Dorsolateral prefrontal cortex (tissue), 120 donors: ENCODE measurements at regions of chr7 and their contacts with region 1.

Region 1: DNA sequence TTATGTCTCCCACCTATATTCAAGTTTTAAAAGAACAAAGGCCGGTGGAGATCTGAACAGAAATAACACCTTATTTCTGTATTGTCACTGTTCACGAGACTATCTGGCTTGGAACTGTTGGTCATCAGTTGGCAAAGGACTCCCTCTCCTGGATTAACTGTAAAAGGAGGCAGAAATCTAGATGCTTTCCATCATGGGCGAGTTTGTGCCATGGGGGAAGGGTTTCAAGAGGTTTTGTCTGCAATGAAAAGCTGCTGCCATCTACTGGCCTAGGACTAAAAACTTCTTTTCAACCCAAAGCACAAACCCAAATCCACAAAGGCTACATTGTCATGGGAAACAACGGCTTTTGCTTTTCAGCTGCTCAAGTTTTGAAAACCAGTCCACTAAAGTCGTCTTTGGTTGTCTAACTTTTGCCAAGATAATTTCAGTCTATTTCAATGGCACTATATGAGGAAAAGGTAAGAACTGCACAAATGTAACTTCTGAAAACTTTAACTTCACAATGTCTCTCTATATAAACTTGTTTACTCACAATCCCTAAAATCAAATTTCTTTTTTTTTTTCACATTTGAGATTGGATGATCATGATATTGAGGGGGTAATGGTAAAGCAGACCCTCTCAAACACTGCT is 196.8 kb downstream of the SKAP2 start:
- DNase-seq: peak in 9 of 10 donors; percentile 48 to 86 (median 69)
- H3K4me3 ChIP-seq: peak overlapping the region in 4 of 59 donors; percentile 9 to 39 (median 21)
- H3K27ac ChIP-seq: peak overlapping the region in 5 of 59 donors; percentile 10 to 51 (median 34)
- H3K27me3 ChIP-seq: peaks cover 0 to 19% (median 0%) of the 10 kb centered on the region in 45 donors
- CTCF ChIP-seq: peak; percentile 82 to 99 (median 95)

Region 2: GRCh38 chr7:25894902-25895791 is 772.5 kb before region 1 on chr7:
- intact Hi-C with region 1: loop called (anchors 5 kb)
- DNase-seq: peak in 9 of 10 donors; percentile 49 to 81 (median 60)
- H3K4me3 ChIP-seq: peak overlapping the region in 56 of 59 donors; percentile 0 to 62 (median 41)
- H3K27ac ChIP-seq: peak overlapping the region in 1 of 59 donors; percentile 5
- H3K27me3 ChIP-seq: peaks cover 0 to 24% (median 0%) of the 10 kb centered on the region in 45 donors
- CTCF ChIP-seq: peak; percentile 32 to 80 (median 68)

Region 3: GRCh38 chr7:26090927-26091519 is 576.6 kb before region 1 on chr7:
- intact Hi-C with region 1: loop called in 1 of 2 experiments (anchors 5 kb)
- DNase-seq: peak in 1 of 10 donors; percentile 26
- H3K4me3 ChIP-seq: peak overlapping the region in 34 of 59 donors; percentile 0 to 48 (median 24)
- H3K27ac ChIP-seq: no peak overlapping the region
- H3K27me3 ChIP-seq: no peaks in the 10 kb centered on the region
- CTCF ChIP-seq: peak; percentile 53 to 93 (median 75)

Region 4: DNA sequence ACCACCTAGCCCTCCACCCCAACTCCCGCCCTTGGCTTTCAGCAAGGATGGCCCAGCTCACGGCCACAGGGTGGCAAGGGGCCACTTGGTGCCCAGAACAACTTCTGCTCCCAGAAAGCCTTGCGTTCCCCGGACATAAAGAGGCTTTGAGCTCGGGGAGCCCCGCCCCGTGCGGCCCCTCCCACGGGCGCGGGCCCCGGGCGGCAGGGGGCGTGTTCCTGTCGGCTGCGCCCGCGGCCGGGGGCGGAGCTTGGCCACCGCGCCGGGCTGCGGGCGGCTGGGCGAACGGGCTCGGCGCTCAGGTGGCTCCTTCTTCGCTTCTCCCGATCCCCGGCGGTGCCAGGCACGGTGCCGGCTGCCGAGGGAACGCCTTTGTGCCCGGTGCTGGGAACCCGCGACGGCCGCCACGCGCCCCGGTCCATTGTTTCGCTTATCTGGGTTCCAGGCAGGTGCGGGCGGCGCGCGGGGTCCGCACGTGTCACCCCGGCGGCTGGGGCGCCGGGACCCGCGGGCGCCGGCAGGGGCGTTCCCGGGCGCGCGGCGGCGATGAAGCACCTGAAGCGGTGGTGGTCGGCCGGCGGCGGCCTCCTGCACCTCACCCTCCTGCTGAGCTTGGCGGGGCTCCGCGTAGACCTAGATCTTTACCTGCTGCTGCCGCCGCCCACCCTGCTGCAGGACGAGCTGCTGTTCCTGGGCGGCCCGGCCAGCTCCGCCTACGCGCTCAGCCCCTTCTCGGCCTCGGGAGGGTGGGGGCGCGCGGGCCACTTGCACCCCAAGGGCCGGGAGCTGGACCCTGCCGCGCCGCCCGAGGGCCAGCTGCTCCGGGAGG is 515.5 kb before region 1 on chr7 and contains the start of gene NFE2L3:
- intact Hi-C with region 1: loop called in 1 of 2 experiments (anchors 5 kb)
- DNase-seq: peak; percentile 55 to 85 (median 72)
- H3K4me3 ChIP-seq: peak within 1 kb of the TSS in 58 of 59 donors; percentile 15 to 73 (median 55)
- H3K27ac ChIP-seq: peak within 1 kb of the TSS in 9 of 59 donors; percentile 4 to 75 (median 49)
- H3K27me3 ChIP-seq: peaks cover 0 to 53% (median 25%) of the 10 kb centered on the region in 45 donors
- CTCF ChIP-seq: peak in 48 of 56 donors; percentile 5 to 69 (median 33)
- total RNA-seq, gene NFE2L3: 0.15 to 5.3 (median 0.80) TPM in 115 of 120 experiments, not detected in the others

Region 5: DNA sequence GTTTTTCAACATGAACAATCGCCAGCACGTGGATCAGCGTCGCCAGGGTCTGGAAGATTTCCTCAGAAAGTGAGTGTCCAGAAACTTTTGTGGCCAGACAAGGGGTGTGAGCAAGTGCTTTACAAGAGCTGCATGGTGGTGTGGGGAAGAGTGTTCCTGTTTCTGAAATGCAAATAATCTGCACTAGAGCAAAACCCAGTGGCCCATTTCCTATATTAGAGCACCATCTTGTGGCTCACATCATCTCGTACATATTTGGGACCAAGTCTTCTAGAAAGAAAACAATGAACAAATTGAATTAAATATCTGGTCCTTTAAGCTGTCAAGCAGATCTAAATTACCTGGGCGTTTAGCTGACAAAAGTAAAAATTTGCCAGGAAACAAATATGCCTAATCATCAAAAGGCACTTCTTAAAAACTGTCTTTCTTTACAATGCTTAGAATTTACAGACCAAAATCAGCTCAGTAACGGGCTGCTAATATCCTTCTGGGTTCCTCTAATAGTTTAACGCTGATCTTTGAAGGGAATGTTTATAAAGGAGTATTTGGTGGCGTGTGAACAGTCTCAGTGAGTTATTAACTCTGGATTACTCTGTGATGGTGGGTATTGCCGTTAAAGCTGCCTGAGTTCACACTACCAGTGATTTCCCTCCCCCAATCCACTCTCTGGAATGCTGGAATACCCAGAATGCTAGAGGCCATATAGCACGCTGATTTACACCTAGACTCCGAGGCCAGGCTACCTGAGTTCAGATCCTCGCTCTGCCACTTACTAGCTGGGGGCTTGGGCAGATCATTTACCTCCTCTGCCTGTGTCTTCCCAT is 302.3 kb before region 1 on chr7:
- intact Hi-C with region 1: loop called (anchors 1 to 2 kb)
- DNase-seq: peak in 4 of 10 donors; percentile 19 to 64 (median 56)
- H3K4me3 ChIP-seq: peak overlapping the region in 4 of 59 donors; percentile 5 to 24 (median 14)
- H3K27ac ChIP-seq: peak overlapping the region in 3 of 59 donors; percentile 4 to 10 (median 5)
- H3K27me3 ChIP-seq: peaks cover 0 to 27% (median 0%) of the 10 kb centered on the region in 45 donors
- CTCF ChIP-seq: peak; percentile 65 to 95 (median 85)

Region 6: DNA sequence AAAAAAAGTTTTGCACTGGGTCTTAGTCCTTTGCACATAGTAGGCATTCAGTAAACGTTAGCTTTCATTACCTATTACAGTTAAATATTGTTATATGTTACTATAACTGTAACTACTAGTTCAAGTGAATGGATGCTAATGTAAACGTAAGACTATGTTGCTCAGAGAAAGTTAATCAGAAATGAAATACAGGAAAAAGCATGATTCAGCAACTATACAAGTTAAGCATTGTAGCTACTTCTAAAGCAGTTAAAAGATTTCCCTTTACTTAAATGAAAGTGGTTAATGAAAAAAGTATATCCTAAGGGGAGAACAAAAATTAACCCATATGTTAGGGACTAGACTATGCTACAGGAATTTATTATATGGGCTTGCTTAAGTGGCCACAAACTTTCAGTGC is 75.6 kb after region 1 on chr7:
- intact Hi-C with region 1: no loop called
- DNase-seq: no peak
- H3K4me3 ChIP-seq: no peak overlapping the region
- H3K27ac ChIP-seq: no peak overlapping the region
- H3K27me3 ChIP-seq: peaks cover 0 to 3% (median 0%) of the 10 kb centered on the region in 45 donors
- CTCF ChIP-seq: no peak

Region 7: GRCh38 chr7:26868841-26869505 is 201.4 kb after region 1 on chr7:
- intact Hi-C with region 1: no loop called
- DNase-seq: no peak
- H3K4me3 ChIP-seq: no peak overlapping the region
- H3K27ac ChIP-seq: no peak overlapping the region
- H3K27me3 ChIP-seq: peaks cover 0 to 38% (median 2%) of the 10 kb centered on the region in 45 donors
- CTCF ChIP-seq: no peak